ENCODE measurements at regions of chr19 and their contacts with region 1.

Region 1: DNA sequence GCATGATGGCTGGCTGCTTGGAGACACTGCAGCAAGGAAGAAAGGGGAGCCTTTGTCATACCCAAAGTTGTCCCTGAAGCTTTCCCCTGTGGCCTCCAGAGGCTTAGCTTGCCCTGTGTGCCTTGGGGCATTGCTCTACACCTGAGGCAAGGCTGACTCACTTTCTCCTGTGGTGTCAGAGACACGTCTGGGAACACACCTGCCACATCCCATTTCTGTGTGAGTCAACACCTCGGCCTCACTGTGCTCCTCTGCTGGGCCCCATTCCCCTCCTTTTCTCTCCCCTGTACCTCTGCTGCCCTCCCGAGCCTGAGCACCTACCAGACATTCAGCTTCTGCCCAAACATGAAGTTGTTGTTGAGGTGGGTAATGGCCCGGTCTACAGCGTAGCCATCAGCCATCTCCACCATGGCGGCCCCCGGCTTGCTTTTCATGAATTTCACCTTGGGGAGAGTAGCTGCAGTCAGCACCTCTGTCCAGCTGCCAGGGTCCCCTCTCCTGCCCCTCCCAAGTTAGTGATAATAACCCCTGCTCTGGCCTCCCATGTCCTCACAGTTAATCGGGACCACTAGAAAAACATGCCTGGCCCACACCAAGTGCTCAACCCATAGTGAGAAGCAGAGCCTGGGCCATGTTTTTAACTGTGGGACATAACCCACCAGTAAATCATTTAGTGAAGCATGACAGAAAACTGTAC is 7.1 kb upstream of the ECH1 start:
- DNase-seq: peak; percentile 94 to 98
- H3K4me3 ChIP-seq: peak overlapping the region; percentile 34; the same call in 1 of the 2 replicates
- H3K27ac ChIP-seq: peak overlapping the region; percentile 98
- H3K4me1 ChIP-seq: peaks cover 65% of the 10 kb centered on the region
- H3K27me3 ChIP-seq: no peaks in the 10 kb centered on the region
- CTCF ChIP-seq: peak; percentile 79

Region 2: GRCh38 chr19:38514812-38515633 is 323.7 kb before region 1 on chr19:
- CTCF ChIA-PET with region 1: no interaction called
- POLR2A ChIA-PET with region 1: no interaction called
- intact Hi-C with region 1: loop called (anchors 1 kb)
- DNase-seq: peak in 1 of 2 experiments; percentile 70
- H3K4me3 ChIP-seq: no peak overlapping the region
- H3K27ac ChIP-seq: no peak overlapping the region
- H3K4me1 ChIP-seq: no peaks in the 10 kb centered on the region
- H3K27me3 ChIP-seq: peaks cover 15% of the 10 kb centered on the region; the same call in 1 of the 2 replicates
- CTCF ChIP-seq: peak; percentile 90

Region 3: DNA sequence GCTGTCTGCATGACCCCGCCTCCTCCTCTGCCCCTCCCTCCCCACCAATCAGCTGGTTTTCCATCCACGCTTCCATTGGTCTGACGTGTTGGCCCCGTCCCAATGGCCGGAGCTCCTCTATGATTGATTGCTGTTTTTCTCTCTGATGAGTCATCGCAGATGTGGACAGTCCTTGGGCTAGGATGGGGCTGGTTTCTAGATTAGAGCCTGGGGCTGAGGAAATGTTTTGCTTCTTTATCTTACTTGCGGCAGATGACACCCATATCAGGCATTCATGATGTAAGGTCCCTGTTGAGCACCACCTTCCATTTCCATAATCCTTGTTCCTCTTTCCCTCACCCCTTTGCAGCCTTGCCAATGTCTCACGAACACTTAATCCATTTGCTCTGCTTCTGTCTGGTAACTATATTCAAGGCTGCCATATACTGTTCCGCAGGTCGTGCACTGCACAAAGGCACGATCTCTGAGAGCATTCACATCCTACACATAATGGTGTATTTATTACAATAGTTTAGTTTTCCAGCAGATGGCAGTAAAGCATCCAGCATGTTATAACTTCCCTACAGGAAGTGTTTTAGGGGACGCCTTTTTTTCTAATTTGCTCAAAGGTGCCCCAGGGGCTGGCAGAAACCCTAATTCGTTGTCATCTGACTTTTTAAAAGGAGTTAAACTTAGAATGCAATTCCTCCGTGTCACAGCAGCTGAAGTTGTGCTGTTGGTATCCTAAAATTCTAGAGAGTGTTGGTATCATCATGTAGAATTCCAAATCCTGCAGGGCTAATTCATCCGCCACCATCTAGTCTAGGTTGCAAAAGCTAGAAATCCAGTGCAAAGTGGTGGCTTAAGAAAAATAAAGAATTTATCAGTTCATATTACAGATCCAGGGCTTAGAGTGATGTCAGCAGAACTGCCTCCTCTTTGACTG is 294.4 kb before region 1 on chr19:
- CTCF ChIA-PET with region 1: no interaction called
- POLR2A ChIA-PET with region 1: no interaction called
- intact Hi-C with region 1: loop called (anchors 1 kb)
- DNase-seq: peak; percentile 60 to 87
- H3K4me3 ChIP-seq: no peak overlapping the region
- H3K27ac ChIP-seq: peak overlapping the region; percentile 47
- H3K4me1 ChIP-seq: peaks cover 24% of the 10 kb centered on the region
- H3K27me3 ChIP-seq: no peaks in the 10 kb centered on the region
- CTCF ChIP-seq: peak; percentile 83

Region 4: GRCh38 chr19:38559428-38560401 is 279.0 kb before region 1 on chr19:
- CTCF ChIA-PET with region 1: no interaction called
- POLR2A ChIA-PET with region 1: no interaction called
- intact Hi-C with region 1: loop called (anchors 5 kb)
- DNase-seq: no peak
- H3K4me3 ChIP-seq: no peak overlapping the region
- H3K27ac ChIP-seq: no peak overlapping the region
- H3K4me1 ChIP-seq: peaks cover 7% of the 10 kb centered on the region; the same call in 1 of the 2 replicates
- H3K27me3 ChIP-seq: no peaks in the 10 kb centered on the region; the same call in 1 of the 2 replicates
- CTCF ChIP-seq: no peak

Region 5: DNA sequence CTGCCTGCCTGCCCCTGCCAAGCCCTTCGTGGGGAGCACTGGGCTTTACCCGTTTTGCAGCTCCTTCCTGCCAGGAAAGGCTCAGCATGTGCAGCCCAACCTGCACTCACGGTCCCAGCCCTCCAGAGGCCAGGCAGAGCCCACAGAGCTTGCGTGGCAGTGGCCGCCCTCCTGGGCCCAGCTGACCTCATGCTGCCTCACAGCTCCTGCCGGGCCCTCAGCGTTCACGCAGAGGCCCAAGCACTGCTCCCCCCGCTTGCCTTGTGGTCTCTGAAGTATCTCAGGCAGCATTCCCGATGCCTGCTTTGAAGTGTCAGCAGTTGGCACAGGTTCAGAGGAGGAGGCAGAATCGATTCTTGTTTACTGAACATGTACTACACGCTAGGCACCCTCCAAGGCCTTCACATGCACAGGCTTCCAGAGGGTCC is 127.0 kb before region 1 on chr19:
- CTCF ChIA-PET with region 1: no interaction called
- POLR2A ChIA-PET with region 1: no interaction called
- intact Hi-C with region 1: no loop called
- DNase-seq: no peak
- H3K4me3 ChIP-seq: no peak overlapping the region
- H3K27ac ChIP-seq: no peak overlapping the region
- H3K4me1 ChIP-seq: peaks cover 16% of the 10 kb centered on the region
- H3K27me3 ChIP-seq: no peaks in the 10 kb centered on the region
- CTCF ChIP-seq: no peak

Region 6: GRCh38 chr19:38729653-38730469 is 108.9 kb before region 1 on chr19:
- CTCF ChIA-PET with region 1: interaction called, 8 read pairs
- POLR2A ChIA-PET with region 1: interaction called, 6 read pairs
- intact Hi-C with region 1: loop called (anchors 1 kb)
- DNase-seq: peak; percentile 65 to 81
- H3K4me3 ChIP-seq: no peak overlapping the region
- H3K27ac ChIP-seq: peak overlapping the region; percentile 58; the same call in 1 of the 2 replicates
- H3K4me1 ChIP-seq: peaks cover 41% of the 10 kb centered on the region
- H3K27me3 ChIP-seq: no peaks in the 10 kb centered on the region
- CTCF ChIP-seq: peak; percentile 92

Region 7: GRCh38 chr19:38736413-38737280 is 102.1 kb before region 1 on chr19:
- CTCF ChIA-PET with region 1: interaction called, 8 read pairs
- POLR2A ChIA-PET with region 1: interaction called, 6 read pairs
- intact Hi-C with region 1: loop called (anchors 1 kb)
- DNase-seq: peak in 1 of 2 experiments; percentile 47
- H3K4me3 ChIP-seq: peak overlapping the region; percentile 49; the same call in 1 of the 2 replicates
- H3K27ac ChIP-seq: peak overlapping the region; percentile 41; the same call in 1 of the 2 replicates
- H3K4me1 ChIP-seq: peaks cover 30% of the 10 kb centered on the region
- H3K27me3 ChIP-seq: no peaks in the 10 kb centered on the region
- CTCF ChIP-seq: no peak

Region 8: GRCh38 chr19:38849860-38850435 is 11.2 kb after region 1 on chr19 and contains the start of gene HNRNPL:
- CTCF ChIA-PET with region 1: no interaction called
- POLR2A ChIA-PET with region 1: interaction called, 20 read pairs
- intact Hi-C with region 1: no loop called
- DNase-seq: peak; percentile 99
- H3K4me3 ChIP-seq: peak within 1 kb of the TSS; percentile 79
- H3K27ac ChIP-seq: peak within 1 kb of the TSS; percentile 93
- H3K4me1 ChIP-seq: peaks cover 35% of the 10 kb centered on the region
- H3K27me3 ChIP-seq: no peaks in the 10 kb centered on the region
- CTCF ChIP-seq: peak; percentile 63
- total RNA-seq, gene HNRNPL: 368 and 443 TPM in 2 replicates

Region 9: GRCh38 chr19:39160334-39160791 is 321.6 kb after region 1 on chr19:
- CTCF ChIA-PET with region 1: no interaction called
- POLR2A ChIA-PET with region 1: no interaction called
- intact Hi-C with region 1: no loop called
- DNase-seq: no peak
- H3K4me3 ChIP-seq: no peak overlapping the region
- H3K27ac ChIP-seq: no peak overlapping the region
- H3K4me1 ChIP-seq: peaks cover 22% of the 10 kb centered on the region
- H3K27me3 ChIP-seq: no peaks in the 10 kb centered on the region
- CTCF ChIP-seq: no peak